ENCODE measurements at regions of chr3 and their contacts with region 1.

Region 1: GRCh38 chr3:185677146-185677829 is 91.2 kb downstream of the SENP2 start:
- DNase-seq: peak; percentile 33
- H3K4me3 Mint-ChIP-seq: no peak overlapping the region
- H3K27ac Mint-ChIP-seq: no peak overlapping the region
- H3K4me1 Mint-ChIP-seq: no peaks in the 10 kb centered on the region
- H3K27me3 Mint-ChIP-seq: peaks cover 48% of the 10 kb centered on the region

Region 2: GRCh38 chr3:185120171-185120570 is 557.1 kb before region 1 on chr3:
- CTCF ChIA-PET with region 1: no interaction called
- POLR2A ChIA-PET with region 1: no interaction called
- DNase-seq: no peak
- H3K4me3 Mint-ChIP-seq: no peak overlapping the region
- H3K27ac Mint-ChIP-seq: no peak overlapping the region
- H3K4me1 Mint-ChIP-seq: no peaks in the 10 kb centered on the region
- H3K27me3 Mint-ChIP-seq: peaks cover 24% of the 10 kb centered on the region

Region 3: GRCh38 chr3:185659942-185660921 is 17.1 kb before region 1 on chr3:
- CTCF ChIA-PET with region 1: interaction called, 19 read pairs
- POLR2A ChIA-PET with region 1: no interaction called
- DNase-seq: peak; percentile 77
- H3K4me3 Mint-ChIP-seq: no peak overlapping the region
- H3K27ac Mint-ChIP-seq: no peak overlapping the region
- H3K4me1 Mint-ChIP-seq: peaks cover 2% of the 10 kb centered on the region
- H3K27me3 Mint-ChIP-seq: peaks cover 17% of the 10 kb centered on the region